ENCODE measurements at regions of chr6 and their contacts with region 1.

Region 1: GRCh38 chr6:166572370-166573261 is 13.9 kb downstream of the RAMACL start:
- DNase-seq: no peak
- ATAC-seq: peak; percentile 10 to 70 (median 40)
- H3K4me3 ChIP-seq: no peak overlapping the region
- H3K27ac ChIP-seq: peak overlapping the region in 1 of 10 donors; percentile 33
- H3K4me1 ChIP-seq: peaks cover 0 to 45% (median 26%) of the 10 kb centered on the region in 9 donors
- H3K27me3 ChIP-seq: no peaks in the 10 kb centered on the region
- CTCF ChIP-seq: no peak

Region 2: DNA sequence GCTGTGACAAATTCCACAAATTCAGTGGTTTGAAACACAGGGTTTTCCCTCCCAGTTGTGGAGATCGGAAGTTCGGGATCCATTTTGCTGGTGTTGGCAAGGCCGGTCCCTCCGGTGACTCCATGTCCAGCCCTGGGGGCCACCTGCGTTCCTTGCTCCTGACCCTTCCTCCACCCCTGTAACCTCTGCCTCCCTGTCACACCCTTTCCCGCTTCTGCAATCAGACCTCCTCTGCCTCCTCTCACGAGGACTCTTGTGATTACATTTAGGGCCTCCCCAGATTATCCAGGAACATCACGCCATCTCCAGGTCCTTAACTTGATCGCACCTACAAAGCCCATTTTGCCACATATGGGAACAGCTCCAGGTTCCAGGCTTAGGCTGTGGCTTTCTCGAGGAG is 42.0 kb after region 1 on chr6:
- intact Hi-C with region 1: loop called in 2 of 10 experiments (anchors 5 kb)
- DNase-seq: peak in 1 of 2 donors; percentile 6
- ATAC-seq: peak in 6 of 8 donors; percentile 7 to 43 (median 21)
- H3K4me3 ChIP-seq: no peak overlapping the region
- H3K27ac ChIP-seq: peak overlapping the region; percentile 52 to 84 (median 70)
- H3K4me1 ChIP-seq: peaks cover 15 to 64% (median 53%) of the 10 kb centered on the region in 9 donors
- H3K27me3 ChIP-seq: no peaks in the 10 kb centered on the region
- CTCF ChIP-seq: peak in 1 of 9 donors; percentile 26

Region 3: GRCh38 chr6:166691199-166691598 is 118.6 kb after region 1 on chr6:
- intact Hi-C with region 1: loop called in 1 of 10 experiments (anchors 10 kb)
- DNase-seq: peak; percentile 60 to 62
- ATAC-seq: peak; percentile 89 to 97 (median 94)
- H3K4me3 ChIP-seq: no peak overlapping the region
- H3K27ac ChIP-seq: peak overlapping the region in 9 of 10 donors; percentile 2 to 79 (median 63)
- H3K4me1 ChIP-seq: peaks cover 4 to 22% (median 17%) of the 10 kb centered on the region in 9 donors
- H3K27me3 ChIP-seq: no peaks in the 10 kb centered on the region
- CTCF ChIP-seq: no peak

Measured in heart right ventricle (tissue), 16 donors.